ENCODE measurements at regions of chr19 and their contacts with region 1.

Region 1: GRCh38 chr19:52269338-52270261 is at the start of gene ZNF766:
- DNase-seq: peak; percentile 94 to 97 (median 96)
- ATAC-seq: peak; percentile 100
- H3K4me3 ChIP-seq: peak within 1 kb of the TSS; percentile 94
- H3K4me3 Mint-ChIP-seq: peak within 1 kb of the TSS; percentile 94 to 100 (median 96)
- H3K27ac ChIP-seq: peak within 1 kb of the TSS; percentile 93
- H3K27ac Mint-ChIP-seq: peak within 1 kb of the TSS; percentile 87 to 97 (median 95)
- H3K4me1 ChIP-seq: peaks cover 15 to 16% of the 10 kb centered on the region in 2 donors
- H3K4me1 Mint-ChIP-seq: peaks cover 20 to 53% (median 45%) of the 10 kb centered on the region in 7 donors
- H3K27me3 ChIP-seq: no peaks in the 10 kb centered on the region
- H3K27me3 Mint-ChIP-seq: no peaks in the 10 kb centered on the region
- total RNA-seq, gene ZNF766: 24.7 to 59.6 (median 41.4) TPM

Region 2: GRCh38 chr19:51926784-51927742 is 342.5 kb before region 1 on chr19 and contains the start of gene ZNF613:
- CTCF ChIA-PET with region 1: no interaction called
- POLR2A ChIA-PET with region 1: interaction called, 3 read pairs
- intact Hi-C with region 1: loop called in 1 of 2 experiments (anchors 1 kb)
- DNase-seq: peak; percentile 65 to 87 (median 83)
- ATAC-seq: peak; percentile 92
- H3K4me3 ChIP-seq: peak within 1 kb of the TSS; percentile 70
- H3K4me3 Mint-ChIP-seq: peak within 1 kb of the TSS; percentile 90 to 100 (median 97)
- H3K27ac ChIP-seq: peak within 1 kb of the TSS; percentile 77
- H3K27ac Mint-ChIP-seq: peak within 1 kb of the TSS; percentile 87 to 96 (median 92)
- H3K4me1 ChIP-seq: peaks cover 4% of the 10 kb centered on the region in 2 donors
- H3K4me1 Mint-ChIP-seq: peaks cover 19 to 41% (median 36%) of the 10 kb centered on the region in 7 donors
- H3K27me3 ChIP-seq: no peaks in the 10 kb centered on the region
- H3K27me3 Mint-ChIP-seq: no peaks in the 10 kb centered on the region
- total RNA-seq, gene ZNF613: 1.5 to 9.6 (median 5.2) TPM

Region 3: DNA sequence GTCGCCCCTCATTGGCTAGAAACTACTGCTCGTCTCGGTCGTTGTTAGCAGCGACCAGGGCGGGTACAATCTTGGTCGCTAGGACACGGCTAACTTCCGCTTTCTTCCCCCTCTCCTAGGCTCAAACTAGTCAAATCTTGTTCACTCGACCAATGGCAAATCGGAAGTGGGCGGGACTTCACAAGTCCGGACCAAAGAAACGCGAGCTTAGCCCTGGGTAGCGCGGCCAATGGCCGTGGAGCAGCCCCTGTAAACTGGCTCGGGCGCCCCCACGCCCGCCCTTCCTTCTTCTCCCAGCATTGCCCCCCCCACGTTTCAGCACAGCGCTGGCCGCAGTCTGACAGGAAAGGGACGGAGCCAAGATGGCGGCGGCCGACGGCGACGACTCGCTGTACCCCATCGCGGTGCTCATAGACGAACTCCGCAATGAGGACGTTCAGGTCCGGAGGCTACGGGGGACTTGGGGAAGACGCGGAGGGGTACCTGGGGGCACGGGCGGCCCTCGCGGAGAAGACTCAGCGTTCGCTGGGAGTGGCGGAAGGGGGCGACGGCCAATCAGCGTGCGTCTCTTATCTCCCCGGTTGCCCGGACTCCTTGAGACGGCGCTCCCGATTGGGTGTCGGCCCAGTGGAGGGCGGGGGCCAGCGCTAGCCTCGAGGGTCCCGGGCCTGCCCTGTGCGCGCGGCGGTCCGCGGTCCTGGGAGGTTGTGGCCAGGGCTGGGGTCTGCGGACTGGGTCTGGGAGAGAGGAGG is 79.7 kb before region 1 on chr19 and contains the start of gene PPP2R1A:
- CTCF ChIA-PET with region 1: no interaction called
- POLR2A ChIA-PET with region 1: no interaction called
- intact Hi-C with region 1: loop called (anchors 1 kb)
- DNase-seq: peak; percentile 97 to 100 (median 99)
- ATAC-seq: peak; percentile 91
- H3K4me3 ChIP-seq: peak within 1 kb of the TSS; percentile 86
- H3K4me3 Mint-ChIP-seq: peak within 1 kb of the TSS; percentile 91 to 99 (median 96)
- H3K27ac ChIP-seq: peak within 1 kb of the TSS; percentile 97
- H3K27ac Mint-ChIP-seq: peak within 1 kb of the TSS; percentile 95 to 100 (median 99)
- H3K4me1 ChIP-seq: peaks cover 34 to 39% of the 10 kb centered on the region in 2 donors
- H3K4me1 Mint-ChIP-seq: peaks cover 29 to 59% (median 46%) of the 10 kb centered on the region in 7 donors
- H3K27me3 ChIP-seq: no peaks in the 10 kb centered on the region
- H3K27me3 Mint-ChIP-seq: no peaks in the 10 kb centered on the region
- total RNA-seq, gene PPP2R1A: 156 to 215 (median 168) TPM

Region 4: DNA sequence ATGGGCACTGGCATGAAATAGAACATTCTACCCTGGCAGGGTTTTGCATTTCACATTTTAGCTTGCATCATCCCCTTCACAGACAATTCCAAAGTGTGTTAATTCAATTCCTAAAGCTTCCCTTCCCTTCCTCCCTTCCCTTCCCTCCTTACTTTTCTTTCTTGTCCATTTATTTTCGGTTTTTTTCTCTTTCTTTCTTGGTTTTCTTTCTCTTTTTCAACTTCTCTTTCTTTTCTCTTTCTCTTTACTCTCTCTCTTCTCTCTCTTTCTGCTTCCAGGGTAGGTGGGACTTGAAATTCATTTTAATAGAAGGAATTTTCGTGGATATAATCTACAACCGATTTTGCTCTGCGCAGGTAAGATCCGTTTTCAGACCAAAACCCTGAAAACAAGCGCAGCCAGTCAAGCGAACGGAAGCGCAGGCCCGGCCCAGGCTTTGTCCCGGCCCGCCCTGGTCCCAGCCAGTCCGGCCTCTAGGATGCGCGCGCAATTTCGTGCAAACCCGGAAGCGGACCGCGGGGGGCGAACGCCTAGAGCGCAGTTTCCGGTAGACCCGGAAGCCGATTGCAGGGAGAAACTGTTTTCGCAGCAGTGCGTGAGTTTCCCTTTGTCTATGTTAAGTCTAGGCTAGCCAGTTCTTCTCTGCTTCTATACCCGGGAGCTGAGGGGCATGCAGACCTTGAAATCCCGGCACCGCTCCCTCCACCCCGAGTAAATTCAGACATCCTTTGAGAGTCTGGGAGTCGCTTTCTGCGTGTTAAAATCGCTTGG is 127.9 kb after region 1 on chr19 and contains the start of gene ZNF528:
- CTCF ChIA-PET with region 1: interaction called, 3 read pairs
- POLR2A ChIA-PET with region 1: no interaction called
- intact Hi-C with region 1: loop called in 1 of 2 experiments (anchors 5 kb)
- DNase-seq: peak; percentile 78 to 95 (median 87)
- ATAC-seq: peak; percentile 98
- H3K4me3 ChIP-seq: peak within 1 kb of the TSS; percentile 94
- H3K4me3 Mint-ChIP-seq: peak within 1 kb of the TSS; percentile 80 to 93 (median 90)
- H3K27ac ChIP-seq: peak within 1 kb of the TSS; percentile 65
- H3K27ac Mint-ChIP-seq: peak within 1 kb of the TSS; percentile 88 to 96 (median 91)
- H3K4me1 ChIP-seq: peaks cover 5 to 12% of the 10 kb centered on the region in 2 donors
- H3K4me1 Mint-ChIP-seq: peaks cover 15 to 34% (median 25%) of the 10 kb centered on the region in 7 donors
- H3K27me3 ChIP-seq: no peaks in the 10 kb centered on the region
- H3K27me3 Mint-ChIP-seq: no peaks in the 10 kb centered on the region
- total RNA-seq, gene ZNF528: 10.6 to 47.3 (median 23.0) TPM

Region 5: DNA sequence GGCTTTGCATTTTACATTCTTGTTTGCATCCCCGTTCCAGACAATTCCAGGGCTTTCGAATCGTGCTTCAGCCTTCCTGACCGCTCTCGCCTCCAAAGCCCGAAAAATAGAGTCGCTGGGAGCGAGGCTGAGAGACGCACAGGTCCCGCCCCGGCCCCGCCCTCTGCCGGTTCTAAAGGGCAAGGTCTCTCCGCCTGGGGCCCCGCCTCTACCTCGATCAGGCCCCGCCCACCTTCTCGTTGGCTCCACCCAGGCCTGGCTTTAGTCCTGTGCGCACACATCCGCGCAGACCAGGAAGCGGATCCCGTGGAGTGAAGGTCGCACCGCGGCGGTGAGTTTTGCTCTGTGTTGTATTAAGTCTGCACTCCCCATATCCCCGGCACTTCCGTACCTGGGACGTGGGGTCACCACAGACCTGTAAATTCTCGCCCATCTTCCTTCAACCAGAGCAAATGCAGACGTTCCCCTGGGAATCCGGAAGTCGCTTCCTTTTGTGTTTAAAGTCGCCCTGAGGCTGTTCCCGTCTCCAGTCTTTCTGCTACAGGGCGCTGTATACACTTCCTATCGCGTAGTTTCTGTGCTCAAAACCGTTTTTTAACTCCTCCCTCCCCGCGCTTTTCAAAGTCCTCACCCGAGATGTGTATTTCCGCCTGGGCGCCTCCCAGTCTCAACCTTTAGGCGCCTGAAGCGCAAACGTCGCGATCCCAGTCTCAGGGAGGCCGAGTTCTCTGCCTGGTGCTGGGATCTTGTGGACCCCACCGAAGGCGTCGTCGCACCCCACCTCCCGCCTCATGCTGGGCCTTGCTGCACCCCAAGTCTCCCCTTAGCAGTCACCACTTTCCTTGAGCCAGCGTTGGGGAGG is 300.6 kb after region 1 on chr19 and contains the start of gene ZNF701:
- CTCF ChIA-PET with region 1: no interaction called
- POLR2A ChIA-PET with region 1: no interaction called
- intact Hi-C with region 1: loop called in 1 of 2 experiments (anchors 1 kb)
- DNase-seq: peak; percentile 92 to 99 (median 96)
- ATAC-seq: peak; percentile 100
- H3K4me3 ChIP-seq: peak within 1 kb of the TSS; percentile 78
- H3K4me3 Mint-ChIP-seq: peak within 1 kb of the TSS; percentile 88 to 99 (median 94)
- H3K27ac ChIP-seq: peak within 1 kb of the TSS; percentile 78
- H3K27ac Mint-ChIP-seq: peak within 1 kb of the TSS; percentile 92 to 98 (median 95)
- H3K4me1 ChIP-seq: peaks cover 10 to 13% of the 10 kb centered on the region in 2 donors
- H3K4me1 Mint-ChIP-seq: peaks cover 9 to 42% (median 37%) of the 10 kb centered on the region in 7 donors
- H3K27me3 ChIP-seq: no peaks in the 10 kb centered on the region
- H3K27me3 Mint-ChIP-seq: no peaks in the 10 kb centered on the region
- total RNA-seq, gene ZNF701: 11.7 to 43.3 (median 28.3) TPM

Region 6: GRCh38 chr19:52823676-52824075 is 554.1 kb after region 1 on chr19:
- CTCF ChIA-PET with region 1: no interaction called
- POLR2A ChIA-PET with region 1: no interaction called
- intact Hi-C with region 1: loop called in 1 of 2 experiments (anchors 1 kb)
- DNase-seq: no peak
- ATAC-seq: no peak
- H3K4me3 ChIP-seq: no peak overlapping the region
- H3K4me3 Mint-ChIP-seq: no peak overlapping the region
- H3K27ac ChIP-seq: no peak overlapping the region
- H3K27ac Mint-ChIP-seq: no peak overlapping the region
- H3K4me1 ChIP-seq: no peaks in the 10 kb centered on the region
- H3K4me1 Mint-ChIP-seq: peaks cover 11 to 23% (median 15%) of the 10 kb centered on the region in 7 donors
- H3K27me3 ChIP-seq: no peaks in the 10 kb centered on the region
- H3K27me3 Mint-ChIP-seq: peaks cover 0 to 5% (median 0%) of the 10 kb centered on the region in 5 donors